ENCODE measurements at regions of chr12 and their contacts with region 1.

Region 1: DNA sequence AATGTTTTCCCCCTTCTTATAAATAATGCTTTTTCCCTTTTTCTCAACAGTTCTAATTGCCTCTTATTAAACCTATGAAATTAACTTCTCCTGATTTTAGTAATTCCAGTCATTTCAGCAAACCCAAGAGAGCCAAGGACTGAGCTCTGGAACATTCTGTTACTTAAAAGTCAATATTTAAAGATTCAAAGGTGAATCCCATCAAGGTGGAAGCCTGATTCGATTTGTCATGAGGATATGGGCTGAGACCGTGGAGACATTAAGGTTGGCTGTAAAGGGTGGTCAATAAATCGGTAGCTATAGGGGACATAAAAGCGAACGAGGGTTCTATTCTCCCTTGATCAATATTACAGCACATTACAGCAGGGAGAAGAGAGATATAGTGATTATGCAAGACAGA is 66.6 kb upstream of the NELL2 start:
- DNase-seq: no peak
- ATAC-seq: no peak
- H3K4me3 Mint-ChIP-seq: no peak overlapping the region
- H3K27ac Mint-ChIP-seq: no peak overlapping the region
- H3K4me1 Mint-ChIP-seq: no peaks in the 10 kb centered on the region
- H3K27me3 Mint-ChIP-seq: peaks cover 23% of the 10 kb centered on the region

Region 2: DNA sequence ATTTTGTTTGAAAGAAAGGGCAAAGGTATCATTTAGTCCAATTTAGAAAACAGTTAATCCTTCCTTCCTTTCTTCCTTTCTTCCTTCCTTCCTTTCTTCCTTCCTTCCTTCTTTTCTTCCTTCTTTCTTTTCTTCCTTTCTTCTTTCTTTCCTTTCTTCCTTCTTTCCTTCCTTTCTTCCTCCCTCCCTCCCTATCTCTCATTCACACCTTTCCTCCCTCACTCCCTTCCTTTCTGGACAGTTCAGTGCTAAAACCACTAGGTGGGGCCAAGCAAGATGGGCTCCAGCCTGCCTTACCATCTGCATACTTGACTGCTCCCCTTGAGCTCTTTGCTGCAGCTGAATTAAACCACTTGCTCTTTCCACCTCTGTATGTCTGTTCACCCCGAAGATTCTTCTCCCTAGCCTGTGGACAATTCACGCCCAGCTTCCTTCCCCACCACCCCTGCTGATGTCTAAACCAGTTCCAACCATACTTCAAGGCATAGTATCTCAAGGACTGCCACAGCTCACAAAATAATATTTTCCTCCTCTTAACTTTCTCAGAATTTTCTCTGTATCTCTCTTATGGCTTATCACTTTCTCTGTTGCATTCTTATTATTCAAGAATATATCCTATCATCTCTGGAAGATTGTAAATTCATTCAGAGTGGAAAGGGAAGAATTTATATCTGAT is 30.2 kb after region 1 on chr12:
- CTCF ChIA-PET with region 1: interaction called, 35 read pairs
- DNase-seq: no peak
- ATAC-seq: peak; percentile 67
- H3K4me3 Mint-ChIP-seq: no peak overlapping the region
- H3K27ac Mint-ChIP-seq: no peak overlapping the region
- H3K4me1 Mint-ChIP-seq: peaks cover 15% of the 10 kb centered on the region
- H3K27me3 Mint-ChIP-seq: peaks cover 10% of the 10 kb centered on the region

Measured in activated CD8-positive, alpha-beta memory T cell treated with anti-CD3 and anti-CD28 coated beads, Interleukin-2, amount 10 ng/mL, durations not matched to agents 7 days and 5 days (primary cell).